ENCODE measurements at regions of chr4 and their contacts with region 1.

Region 1: DNA sequence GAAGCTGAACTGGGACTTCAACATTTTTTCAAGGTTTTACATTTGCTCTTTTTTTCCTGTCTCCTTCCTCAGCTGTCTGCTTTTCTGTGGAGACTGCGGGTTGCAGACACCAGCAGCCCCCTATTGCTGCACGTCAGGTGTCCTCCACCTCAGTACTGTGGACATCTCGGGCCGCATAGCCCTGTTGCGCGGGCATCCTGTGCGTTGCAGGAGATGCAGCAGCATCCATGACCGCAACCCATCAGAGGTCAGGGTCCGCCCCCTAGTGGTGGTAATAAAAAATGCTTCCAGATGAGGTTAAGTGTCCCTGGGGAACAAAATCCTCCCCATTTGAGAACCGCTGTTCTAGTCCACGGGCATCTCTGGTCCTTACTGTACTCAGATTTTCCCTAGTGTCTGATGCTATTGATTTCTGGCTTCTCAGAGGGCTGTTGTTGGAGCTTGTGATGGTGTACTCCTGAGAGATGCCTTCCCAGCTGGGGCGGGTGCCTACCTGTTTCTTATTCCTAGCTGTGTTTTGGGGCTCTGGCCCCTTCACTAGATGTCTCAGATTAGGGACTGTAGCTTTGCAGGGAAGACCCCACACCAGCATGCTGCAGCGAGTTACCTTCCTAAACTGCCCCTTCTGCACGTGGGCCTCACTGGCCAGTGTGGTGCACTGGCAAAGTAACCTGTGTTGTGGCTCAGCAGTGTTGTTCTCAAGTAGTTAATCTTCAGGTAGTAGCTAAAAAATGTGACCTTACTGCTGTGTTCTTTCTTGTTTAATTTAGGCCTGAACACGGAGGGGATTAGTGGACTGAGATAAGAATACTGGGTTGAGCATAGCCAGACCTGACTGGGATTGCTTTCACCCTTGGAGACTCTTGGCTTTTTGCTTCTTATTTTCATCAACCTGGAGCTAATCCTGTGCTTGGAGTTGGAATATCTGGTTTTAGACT is 28.2 kb downstream of the NSD2 start:
- DNase-seq: peak; percentile 48
- ATAC-seq: peak; percentile 94
- H3K4me3 ChIP-seq: no peak overlapping the region
- H3K27ac ChIP-seq: no peak overlapping the region; the same call in 1 of the 2 replicates
- H3K4me1 ChIP-seq: peaks cover 0 to 6% of the 10 kb centered on the region in 2 experiments; a peak in 2 of 4 replicates
- H3K27me3 ChIP-seq: no peaks in the 10 kb centered on the region
- CTCF ChIP-seq: peak; percentile 61 to 89 (median 75); a peak in 5 of 6 replicates
- POLR2A ChIP-seq: no peak
- RAD21 ChIP-seq: peak; percentile 83

Region 2: DNA sequence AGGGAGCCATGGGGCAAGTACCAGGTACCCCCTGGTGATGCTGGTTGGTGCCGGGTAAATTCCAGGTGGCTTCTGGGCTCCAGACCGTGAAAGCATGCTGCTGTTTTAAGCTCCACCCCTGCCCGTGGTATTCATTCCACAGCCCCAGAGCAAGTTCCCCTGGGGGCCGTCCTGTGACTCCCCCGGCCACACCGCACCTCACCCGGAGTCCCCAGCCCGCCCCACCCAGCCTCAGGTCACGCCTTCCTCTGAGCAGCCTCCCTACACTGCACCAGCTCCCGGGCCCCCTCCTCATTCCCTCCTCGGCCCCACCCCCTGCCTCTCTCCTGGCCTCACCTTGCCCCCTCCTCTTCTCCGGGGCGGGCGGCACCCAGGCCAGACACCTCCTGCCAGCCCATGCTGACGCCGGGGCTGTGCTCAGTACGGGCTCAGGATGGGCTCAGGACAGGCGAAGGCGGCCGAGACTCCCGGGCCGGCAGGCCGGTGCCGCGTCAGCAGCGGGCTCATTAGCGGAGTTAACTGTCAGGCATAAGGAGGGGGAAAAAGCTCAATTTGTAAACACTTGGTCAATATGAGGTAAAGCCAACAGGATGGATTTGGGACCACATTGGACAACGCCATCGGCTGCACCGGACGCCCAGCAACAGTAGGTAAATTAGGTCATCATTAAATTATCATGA is 342.7 kb before region 1 on chr4:
- CTCF ChIA-PET with region 1: no interaction called
- POLR2A ChIA-PET with region 1: no interaction called
- RAD21 ChIA-PET with region 1: no interaction called
- intact Hi-C with region 1: no loop called
- DNase-seq: no peak
- ATAC-seq: no peak
- H3K4me3 ChIP-seq: no peak overlapping the region
- H3K27ac ChIP-seq: no peak overlapping the region
- H3K4me1 ChIP-seq: no peaks in the 10 kb centered on the region
- H3K27me3 ChIP-seq: no peaks in the 10 kb centered on the region
- CTCF ChIP-seq: no peak
- POLR2A ChIP-seq: no peak
- RAD21 ChIP-seq: no peak

Region 3: DNA sequence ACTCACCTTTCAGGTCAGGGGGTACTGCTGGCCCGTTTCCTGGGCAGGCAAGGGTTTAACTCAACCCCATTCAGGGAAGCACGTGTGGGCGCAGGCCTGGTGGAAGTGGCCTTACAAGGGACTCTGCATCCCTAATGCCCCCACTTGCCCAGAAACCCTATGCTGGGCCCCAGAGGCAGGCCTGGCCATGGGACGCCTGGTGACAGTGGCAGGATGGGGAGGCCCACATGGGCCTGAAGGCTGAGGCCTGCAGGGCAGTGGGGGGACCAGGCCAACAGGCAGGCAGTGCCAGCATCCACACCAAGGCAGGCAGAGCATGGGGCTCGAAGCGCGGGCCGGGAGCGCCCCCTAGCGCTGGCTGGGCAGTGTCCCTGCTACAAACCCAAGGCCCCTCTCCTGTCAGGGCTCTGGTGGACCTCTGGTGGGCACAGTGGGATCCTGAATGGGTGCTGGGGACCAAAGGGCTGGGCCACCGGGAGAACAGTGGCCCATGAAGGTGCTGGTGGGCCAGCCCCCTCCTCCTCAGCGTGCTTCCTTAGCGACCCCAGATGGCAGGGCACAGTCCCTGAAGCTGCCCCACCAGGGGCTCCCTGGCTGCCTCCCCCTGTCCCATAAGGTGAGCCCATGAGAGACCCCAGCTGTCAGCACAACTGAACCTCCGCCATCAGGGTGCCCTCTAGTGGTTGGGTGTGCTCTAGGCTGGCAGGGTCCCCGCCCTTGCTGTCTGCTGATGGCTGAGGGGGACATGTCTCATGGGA is 89.5 kb before region 1 on chr4:
- CTCF ChIA-PET with region 1: interaction called, 3 read pairs
- POLR2A ChIA-PET with region 1: no interaction called
- RAD21 ChIA-PET with region 1: no interaction called
- intact Hi-C with region 1: loop called (anchors 5 kb)
- DNase-seq: peak; percentile 34
- ATAC-seq: peak; percentile 92
- H3K4me3 ChIP-seq: no peak overlapping the region
- H3K27ac ChIP-seq: peak overlapping the region; percentile 3; the same call in 1 of the 2 replicates
- H3K4me1 ChIP-seq: peaks cover 0 to 5% of the 10 kb centered on the region in 2 experiments; a peak in 1 of 4 replicates
- H3K27me3 ChIP-seq: no peaks in the 10 kb centered on the region
- CTCF ChIP-seq: peak; percentile 89 to 98 (median 95)
- POLR2A ChIP-seq: no peak
- RAD21 ChIP-seq: peak; percentile 97

Measured in HCT116 (cell line).